Activated CD8-positive, alpha-beta T cell treated with anti-CD3 and anti-CD28 coated beads for 36 hours (primary cell): ENCODE measurements at regions of chr10 and their contacts with region 1.

Region 1: DNA sequence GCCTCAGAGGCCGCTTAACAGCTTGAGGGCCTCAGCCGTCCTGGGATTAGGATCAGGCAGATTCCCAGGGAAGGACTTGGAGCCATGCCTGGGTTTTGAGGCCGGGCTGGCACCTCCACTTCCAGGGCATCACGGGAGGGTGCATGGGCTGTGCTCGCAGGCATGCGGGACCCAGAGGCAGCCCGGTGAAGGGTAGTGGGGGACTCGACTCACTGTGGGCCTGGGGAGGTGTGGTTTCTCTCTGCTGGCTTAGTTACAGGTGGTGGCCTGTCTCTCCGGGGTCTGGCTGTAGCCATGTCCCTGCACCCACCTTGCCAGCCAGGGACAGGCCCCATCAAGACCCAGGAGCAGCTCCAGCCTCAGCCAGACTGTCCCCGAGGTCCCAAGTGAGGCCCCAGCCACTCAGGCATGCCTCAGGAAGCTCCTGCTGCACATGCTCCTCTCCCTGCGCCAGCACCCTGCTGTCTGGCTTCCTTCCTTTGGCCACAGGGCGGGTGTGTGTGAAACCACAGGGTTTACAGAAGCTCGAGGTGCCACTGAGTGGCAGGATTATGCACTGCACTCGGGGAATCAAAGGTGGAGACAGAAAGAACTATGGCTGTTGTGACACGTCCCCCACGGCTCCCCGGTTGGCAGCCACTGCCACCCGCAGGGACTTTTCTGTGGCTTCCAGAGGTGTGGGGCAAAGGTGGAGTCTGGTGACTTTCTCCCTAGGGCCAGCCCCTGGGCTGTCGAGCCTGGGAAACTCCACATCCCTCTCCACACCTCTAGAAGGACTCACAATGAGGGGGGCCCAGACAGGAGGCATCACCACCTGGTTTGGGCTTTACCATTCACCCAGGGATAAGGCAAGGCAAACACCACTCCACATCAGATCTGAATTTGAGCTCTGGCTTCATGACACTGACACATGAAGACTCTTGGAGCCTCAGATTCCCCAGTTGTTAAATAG is 19.7 kb downstream of the GOLGA7B start:
- DNase-seq: peak; percentile 95
- ATAC-seq: peak; percentile 100
- H3K4me3 Mint-ChIP-seq: peak overlapping the region; percentile 31
- H3K27ac Mint-ChIP-seq: peak overlapping the region; percentile 80
- H3K4me1 Mint-ChIP-seq: peaks cover 13% of the 10 kb centered on the region
- H3K27me3 Mint-ChIP-seq: no peaks in the 10 kb centered on the region
- CTCF ChIP-seq: peak; percentile 91

Region 2: GRCh38 chr10:97701438-97702069 is 167.8 kb before region 1 on chr10:
- CTCF ChIA-PET with region 1: interaction called, 17 read pairs
- POLR2A ChIA-PET with region 1: no interaction called
- intact Hi-C with region 1: no loop called
- DNase-seq: peak; percentile 61
- ATAC-seq: peak; percentile 99
- H3K4me3 Mint-ChIP-seq: no peak overlapping the region
- H3K27ac Mint-ChIP-seq: no peak overlapping the region
- H3K4me1 Mint-ChIP-seq: no peaks in the 10 kb centered on the region
- H3K27me3 Mint-ChIP-seq: no peaks in the 10 kb centered on the region
- CTCF ChIP-seq: peak; percentile 89

Region 3: DNA sequence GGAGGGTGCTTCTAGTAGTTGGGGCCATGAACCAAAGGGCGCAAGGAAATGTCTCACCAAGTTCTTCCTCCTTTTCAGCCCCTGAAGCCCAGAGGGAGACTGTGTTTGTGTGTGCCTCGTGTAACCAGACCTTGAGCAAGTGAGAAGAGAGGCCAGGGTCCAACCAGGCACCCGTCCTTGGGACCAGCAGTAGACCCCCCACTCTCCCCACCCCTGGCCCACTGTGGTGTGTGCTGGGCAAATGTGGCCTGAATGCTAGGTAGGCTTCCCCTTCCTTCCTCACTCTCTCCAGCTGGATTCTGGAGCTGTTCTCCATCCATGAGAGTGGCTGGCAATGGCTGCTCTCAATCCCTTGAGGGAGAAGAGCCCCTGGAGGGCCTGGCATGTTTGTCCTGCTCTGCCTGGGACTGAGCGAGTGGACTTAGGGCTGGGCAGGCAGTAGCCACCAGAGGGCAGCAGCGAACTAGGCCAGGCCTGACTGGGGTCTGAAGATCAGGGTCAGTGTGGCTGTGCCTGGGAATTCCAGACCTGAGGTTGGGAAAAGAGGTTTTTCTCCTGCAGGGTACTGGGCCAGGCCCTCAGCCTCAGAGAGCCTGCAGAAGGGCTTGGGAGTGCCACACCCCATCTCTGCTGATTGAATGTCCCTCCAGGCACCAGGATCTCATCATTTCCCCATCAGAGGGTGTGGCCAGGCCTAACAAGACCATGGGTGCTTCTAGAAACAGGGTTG is 110.0 kb before region 1 on chr10:
- CTCF ChIA-PET with region 1: interaction called, 17 read pairs
- POLR2A ChIA-PET with region 1: no interaction called
- intact Hi-C with region 1: no loop called
- DNase-seq: peak; percentile 65
- ATAC-seq: peak; percentile 89
- H3K4me3 Mint-ChIP-seq: no peak overlapping the region
- H3K27ac Mint-ChIP-seq: no peak overlapping the region
- H3K4me1 Mint-ChIP-seq: no peaks in the 10 kb centered on the region
- H3K27me3 Mint-ChIP-seq: no peaks in the 10 kb centered on the region
- CTCF ChIP-seq: peak; percentile 75

Region 4: GRCh38 chr10:97780841-97781617 is 88.3 kb before region 1 on chr10:
- CTCF ChIA-PET with region 1: interaction called, 28 read pairs
- POLR2A ChIA-PET with region 1: interaction called, 7 read pairs
- intact Hi-C with region 1: no loop called
- DNase-seq: no peak
- ATAC-seq: no peak
- H3K4me3 Mint-ChIP-seq: no peak overlapping the region
- H3K27ac Mint-ChIP-seq: peak overlapping the region; percentile 83
- H3K4me1 Mint-ChIP-seq: peaks cover 33% of the 10 kb centered on the region
- H3K27me3 Mint-ChIP-seq: no peaks in the 10 kb centered on the region
- CTCF ChIP-seq: no peak